PC-9 (cell line): ENCODE measurements at regions of chr9 and their contacts with region 1.

Region 1: DNA sequence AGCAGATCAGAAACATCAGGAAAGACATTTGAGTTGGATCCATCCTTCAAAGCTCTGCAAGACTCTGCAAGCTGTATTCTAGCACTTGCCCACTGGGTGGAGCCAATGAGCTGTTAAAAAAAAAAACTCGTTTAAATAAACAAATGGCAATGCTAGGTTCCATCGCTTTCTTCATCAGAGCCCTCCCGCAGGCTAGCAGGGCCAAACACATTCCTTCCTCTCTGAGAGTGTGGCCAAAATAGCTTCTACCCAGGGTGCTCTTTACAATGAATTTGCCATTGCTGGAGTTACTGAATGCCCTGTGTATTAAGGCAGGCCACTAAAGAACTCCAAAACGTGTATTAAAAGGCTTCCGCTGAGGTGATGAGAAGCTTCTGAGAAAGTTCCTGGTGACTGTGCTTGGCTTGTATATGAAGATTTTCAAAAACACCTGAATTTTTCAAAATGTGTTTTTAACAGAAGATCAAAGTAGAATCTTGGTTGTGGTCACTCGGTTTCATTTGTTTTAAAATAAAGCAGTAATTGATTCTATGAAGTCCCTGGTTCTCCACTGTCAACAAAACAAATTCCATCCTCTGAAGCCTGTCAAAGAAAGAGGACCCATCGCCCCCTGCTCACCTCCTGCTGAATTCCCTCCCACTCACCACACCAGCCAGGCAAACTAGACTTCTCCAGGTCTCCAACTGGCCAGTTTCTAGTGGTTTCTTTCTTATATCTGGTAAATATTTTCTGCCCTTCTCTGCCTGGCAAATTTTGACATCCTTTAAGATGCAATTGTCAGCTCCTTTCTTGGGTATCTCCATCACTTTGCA is 36.5 kb upstream of the EQTN start:
- DNase-seq: peak; percentile 56 to 62
- H3K4me3 ChIP-seq: no peak overlapping the region
- H3K27ac ChIP-seq: no peak overlapping the region
- H3K4me1 ChIP-seq: 0 out of 2 replicates have a peak, but pooled peaks cover 3% of the 10 kb centered on the region
- H3K27me3 ChIP-seq: no peaks in the 10 kb centered on the region
- CTCF ChIP-seq: peak; percentile 80

Region 2: DNA sequence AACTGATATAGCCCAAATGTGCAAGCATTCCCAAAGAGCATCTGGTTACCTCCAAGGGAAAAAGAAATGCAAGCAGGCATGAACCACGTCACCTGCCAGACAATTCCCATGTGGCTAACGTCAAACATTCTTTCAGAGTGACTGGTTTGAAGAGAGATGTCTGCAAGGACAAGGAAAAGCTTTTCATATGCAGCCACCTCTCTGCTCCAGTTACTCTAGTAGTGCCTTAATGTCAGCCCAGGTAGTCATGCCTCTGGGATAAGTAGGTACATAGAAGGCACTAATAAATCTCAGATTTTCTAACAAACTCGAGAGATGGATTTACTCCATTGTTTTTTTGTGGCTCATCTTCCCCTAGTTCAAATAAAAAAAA is 93.8 kb after region 1 on chr9:
- CTCF ChIA-PET with region 1: no interaction called
- POLR2A ChIA-PET with region 1: no interaction called
- intact Hi-C with region 1: loop called (anchors 10 kb)
- DNase-seq: peak; percentile 55 to 78
- H3K4me3 ChIP-seq: no peak overlapping the region
- H3K27ac ChIP-seq: peak overlapping the region; percentile 47
- H3K4me1 ChIP-seq: peaks cover 44% of the 10 kb centered on the region
- H3K27me3 ChIP-seq: no peaks in the 10 kb centered on the region
- CTCF ChIP-seq: no peak

Region 3: GRCh38 chr9:27529316-27530278 is 196.2 kb after region 1 on chr9 and contains the start of gene MOB3B:
- CTCF ChIA-PET with region 1: interaction called, 9 read pairs
- POLR2A ChIA-PET with region 1: no interaction called
- intact Hi-C with region 1: loop called (anchors 1 kb)
- DNase-seq: peak in 1 of 2 experiments; percentile 72
- H3K4me3 ChIP-seq: peak within 1 kb of the TSS; percentile 75
- H3K27ac ChIP-seq: no peak within 1 kb of the TSS
- H3K4me1 ChIP-seq: 0 out of 2 replicates have a peak, but pooled peaks cover 2% of the 10 kb centered on the region
- H3K27me3 ChIP-seq: 0 out of 2 replicates have a peak, but pooled peaks cover 3% of the 10 kb centered on the region
- CTCF ChIP-seq: peak; percentile 79
- total RNA-seq, gene MOB3B: 2.7 and 4.4 TPM in 2 replicates

Region 4: GRCh38 chr9:27548055-27548741 is 214.8 kb after region 1 on chr9:
- CTCF ChIA-PET with region 1: interaction called, 6 read pairs
- POLR2A ChIA-PET with region 1: no interaction called
- intact Hi-C with region 1: loop called (anchors 1 kb)
- DNase-seq: peak in 1 of 2 experiments; percentile 36
- H3K4me3 ChIP-seq: no peak overlapping the region
- H3K27ac ChIP-seq: no peak overlapping the region
- H3K4me1 ChIP-seq: no peaks in the 10 kb centered on the region
- H3K27me3 ChIP-seq: no peaks in the 10 kb centered on the region
- CTCF ChIP-seq: peak; percentile 47

Region 5: GRCh38 chr9:27673641-27674040 is 340.2 kb after region 1 on chr9:
- CTCF ChIA-PET with region 1: no interaction called
- POLR2A ChIA-PET with region 1: no interaction called
- intact Hi-C with region 1: loop called (anchors 10 kb)
- DNase-seq: no peak
- H3K4me3 ChIP-seq: no peak overlapping the region
- H3K27ac ChIP-seq: no peak overlapping the region
- H3K4me1 ChIP-seq: no peaks in the 10 kb centered on the region
- H3K27me3 ChIP-seq: no peaks in the 10 kb centered on the region
- CTCF ChIP-seq: no peak

Region 6: GRCh38 chr9:28073270-28073669 is 739.8 kb after region 1 on chr9:
- CTCF ChIA-PET with region 1: no interaction called
- POLR2A ChIA-PET with region 1: no interaction called
- intact Hi-C with region 1: loop called (anchors 5 kb)
- DNase-seq: no peak
- H3K4me3 ChIP-seq: no peak overlapping the region
- H3K27ac ChIP-seq: no peak overlapping the region
- H3K4me1 ChIP-seq: no peaks in the 10 kb centered on the region
- H3K27me3 ChIP-seq: no peaks in the 10 kb centered on the region
- CTCF ChIP-seq: peak; percentile 54